ENCODE measurements at regions of chr1 and their contacts with region 1.

Region 1: DNA sequence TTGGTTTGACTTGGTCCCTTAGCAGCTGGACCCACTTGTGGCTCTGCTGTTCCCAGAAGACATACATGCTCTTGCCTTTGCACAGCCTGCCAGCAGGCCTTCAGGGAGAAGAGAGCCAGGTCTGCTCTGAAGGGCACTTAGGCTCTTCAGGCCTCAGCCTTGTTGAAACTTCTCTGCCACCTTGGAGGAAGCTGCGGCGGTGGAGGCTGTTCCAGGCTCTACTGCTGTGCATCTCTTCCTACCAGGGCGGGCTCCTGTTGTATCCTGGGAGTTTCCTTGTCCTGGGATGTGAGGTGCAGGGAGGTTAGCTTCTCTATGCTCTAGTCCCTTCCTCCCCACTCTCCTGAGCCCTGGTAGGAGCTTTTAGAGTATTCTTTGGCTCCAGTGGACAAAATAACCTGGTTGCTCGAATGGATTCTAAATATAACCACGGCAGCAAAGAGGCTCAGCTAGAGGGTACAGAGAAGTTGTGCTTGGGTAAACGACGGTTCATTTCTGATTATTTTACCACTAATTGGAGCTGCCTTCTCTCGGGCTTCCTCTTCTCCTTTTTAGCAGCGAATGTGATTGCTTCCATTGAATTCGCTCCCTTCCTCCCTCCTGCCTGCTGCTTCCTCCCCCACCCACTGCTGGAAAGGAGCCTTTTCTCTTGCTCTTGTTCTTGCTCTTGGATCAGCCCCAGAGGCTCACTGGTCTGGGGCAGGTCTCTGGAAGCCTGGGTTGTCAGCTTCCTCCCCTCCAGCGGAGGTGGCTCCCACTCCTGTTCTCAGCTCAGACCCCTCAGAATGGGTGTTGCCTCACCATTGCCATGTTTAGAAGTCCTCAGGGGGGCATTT is 126.6 kb upstream of the CACNA1E start:
- DNase-seq: no peak
- H3K4me3 ChIP-seq: no peak overlapping the region
- H3K4me3 Mint-ChIP-seq: no peak overlapping the region
- H3K27ac Mint-ChIP-seq: no peak overlapping the region
- H3K4me1 ChIP-seq: peaks cover 5% of the 10 kb centered on the region
- H3K4me1 Mint-ChIP-seq: peaks cover 7% of the 10 kb centered on the region
- H3K27me3 ChIP-seq: no peaks in the 10 kb centered on the region
- H3K27me3 Mint-ChIP-seq: peaks cover 3% of the 10 kb centered on the region
- CTCF ChIP-seq: no peak

Region 2: DNA sequence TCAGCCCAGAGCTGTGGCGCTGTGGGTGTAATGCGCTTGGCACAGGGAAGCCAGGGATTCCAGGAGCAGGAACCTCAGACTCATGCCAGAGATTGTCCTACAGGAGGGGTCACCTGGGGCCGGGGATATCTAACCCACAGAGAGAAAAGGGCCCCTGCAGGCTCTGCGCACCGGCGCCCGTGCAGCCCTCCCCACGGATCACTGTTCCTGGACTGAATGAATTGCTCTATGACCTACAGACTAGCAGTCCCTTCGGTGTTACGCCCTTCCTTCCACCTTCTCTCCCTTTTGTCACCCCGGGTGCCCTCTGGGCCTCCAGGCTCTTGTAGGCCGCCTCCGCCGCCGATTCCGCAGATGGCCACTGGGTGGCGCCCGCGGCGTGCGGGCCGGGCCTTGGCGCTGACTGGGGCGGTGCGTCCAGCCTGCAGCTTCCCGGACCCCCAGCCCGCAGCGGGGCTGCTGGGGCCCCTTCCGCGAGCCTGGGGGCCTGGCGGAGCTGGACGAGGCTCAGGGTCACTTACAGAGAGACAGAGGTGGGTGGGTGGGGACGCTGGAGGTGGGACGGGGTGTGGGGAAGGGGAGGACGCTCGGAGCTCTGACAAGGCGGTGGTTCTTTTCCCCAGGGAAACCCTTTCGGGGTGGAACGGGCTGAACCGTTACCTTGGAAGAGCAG is 166.9 kb before region 1 on chr1:
- CTCF ChIA-PET with region 1: no interaction called
- POLR2A ChIA-PET with region 1: no interaction called
- intact Hi-C with region 1: loop called (anchors 10 kb)
- DNase-seq: peak; percentile 62 to 89
- H3K4me3 ChIP-seq: peak overlapping the region; percentile 23
- H3K4me3 Mint-ChIP-seq: peak overlapping the region; percentile 50
- H3K27ac Mint-ChIP-seq: no peak overlapping the region
- H3K4me1 ChIP-seq: no peaks in the 10 kb centered on the region
- H3K4me1 Mint-ChIP-seq: peaks cover 6% of the 10 kb centered on the region
- H3K27me3 ChIP-seq: no peaks in the 10 kb centered on the region; the same call in 1 of the 2 replicates
- H3K27me3 Mint-ChIP-seq: peaks cover 28% of the 10 kb centered on the region
- CTCF ChIP-seq: peak; percentile 94 to 96

Region 3: GRCh38 chr1:181369416-181369815 is 12.7 kb after region 1 on chr1:
- CTCF ChIA-PET with region 1: no interaction called
- POLR2A ChIA-PET with region 1: no interaction called
- intact Hi-C with region 1: no loop called
- DNase-seq: no peak
- H3K4me3 ChIP-seq: no peak overlapping the region
- H3K4me3 Mint-ChIP-seq: no peak overlapping the region
- H3K27ac Mint-ChIP-seq: no peak overlapping the region
- H3K4me1 ChIP-seq: no peaks in the 10 kb centered on the region
- H3K4me1 Mint-ChIP-seq: no peaks in the 10 kb centered on the region
- H3K27me3 ChIP-seq: no peaks in the 10 kb centered on the region
- H3K27me3 Mint-ChIP-seq: peaks cover 4% of the 10 kb centered on the region
- CTCF ChIP-seq: no peak

Measured in Caco-2 (cell line).